ENCODE measurements at regions of chr12 and their contacts with region 1.

Region 1: GRCh38 chr12:6195665-6196535 is 4.3 kb upstream of the CD9 start:
- DNase-seq: no peak
- H3K4me3 ChIP-seq: no peak overlapping the region
- CTCF ChIP-seq: peak; percentile 93

Region 2: GRCh38 chr12:5988659-5989116 is 207.2 kb before region 1 on chr12:
- CTCF ChIA-PET with region 1: interaction called, 18 read pairs
- POLR2A ChIA-PET with region 1: no interaction called
- DNase-seq: peak; percentile 5
- H3K4me3 ChIP-seq: no peak overlapping the region
- CTCF ChIP-seq: peak; percentile 98

Region 3: GRCh38 chr12:6062757-6063735 is 132.9 kb before region 1 on chr12:
- CTCF ChIA-PET with region 1: interaction called, 20 read pairs
- POLR2A ChIA-PET with region 1: no interaction called
- DNase-seq: no peak
- H3K4me3 ChIP-seq: no peak overlapping the region
- CTCF ChIP-seq: peak; percentile 98

Region 4: DNA sequence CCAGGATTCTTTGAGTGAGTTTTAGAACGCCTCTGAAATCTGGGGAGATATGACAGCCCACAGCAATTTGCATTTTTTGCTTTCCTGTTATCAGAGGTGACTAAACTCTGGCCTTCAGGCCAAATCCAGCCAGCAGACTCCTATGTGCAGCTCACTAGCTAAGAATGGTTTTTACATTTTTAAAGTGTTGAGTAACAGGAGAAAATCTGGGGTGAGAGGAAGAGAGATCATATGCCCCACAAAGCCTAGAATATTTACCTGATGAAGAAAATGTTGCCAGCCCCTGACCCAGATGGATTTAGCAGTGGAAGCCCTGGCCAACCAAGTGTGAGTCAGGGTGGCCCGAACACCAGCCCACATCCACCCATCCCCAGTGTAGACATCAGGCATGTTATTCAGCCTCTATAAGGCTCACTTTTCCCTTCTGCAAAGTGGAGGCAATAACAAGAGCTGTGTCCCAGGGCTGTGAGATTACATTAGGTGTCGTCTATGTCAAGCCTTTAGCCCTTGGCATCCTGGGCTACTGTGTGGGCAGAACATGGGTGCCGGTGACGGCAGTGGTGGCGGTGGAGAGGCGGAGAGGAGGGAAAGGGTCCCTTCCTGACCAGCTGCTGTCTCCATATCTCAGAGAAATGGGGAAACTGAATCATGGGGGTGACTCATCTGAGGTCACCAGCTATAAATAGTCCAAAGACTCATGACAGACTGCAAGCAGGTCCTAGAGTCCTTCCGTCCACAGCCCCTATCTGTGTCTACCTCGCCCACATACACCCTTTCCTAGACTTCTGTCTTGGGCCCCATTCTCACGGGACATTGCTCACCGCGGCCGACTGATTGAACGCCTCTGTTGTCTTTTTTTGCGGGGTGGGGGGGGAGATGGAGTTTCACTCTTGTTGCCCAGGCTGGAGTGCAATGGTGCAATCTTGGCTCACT is 28.3 kb before region 1 on chr12:
- CTCF ChIA-PET with region 1: interaction called, 23 read pairs
- POLR2A ChIA-PET with region 1: no interaction called
- DNase-seq: peak; percentile 71
- H3K4me3 ChIP-seq: no peak overlapping the region
- CTCF ChIP-seq: no peak

Region 5: DNA sequence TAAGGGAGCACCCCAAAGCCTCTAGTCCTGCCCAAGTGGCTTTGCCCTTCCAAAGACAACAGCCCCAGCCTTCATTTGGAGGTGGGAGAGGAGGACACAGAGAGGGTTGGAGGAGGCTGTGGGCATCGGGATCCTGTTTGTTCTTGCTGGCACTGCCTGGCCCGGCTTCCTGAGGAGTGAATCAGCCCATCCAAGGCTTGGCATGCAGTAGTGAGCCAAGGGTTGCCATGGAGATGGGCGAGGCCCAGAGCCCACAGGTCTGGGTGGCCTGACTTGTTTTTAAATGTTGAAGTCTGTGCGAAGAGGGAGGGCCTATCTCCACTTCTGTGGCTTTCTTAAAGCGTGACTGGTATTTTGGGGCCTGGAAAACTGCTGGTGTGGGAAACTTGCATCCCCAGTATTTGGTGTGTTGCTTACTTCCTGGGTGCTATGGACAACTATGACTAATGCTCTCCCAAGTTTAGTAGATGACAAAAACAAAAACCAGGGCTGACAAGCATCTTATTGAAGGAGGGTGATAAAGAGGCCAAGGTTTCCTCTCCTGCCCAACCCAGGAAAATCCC is 20.1 kb after region 1 on chr12:
- CTCF ChIA-PET with region 1: interaction called, 207 read pairs
- POLR2A ChIA-PET with region 1: no interaction called
- DNase-seq: peak; percentile 75
- H3K4me3 ChIP-seq: no peak overlapping the region
- CTCF ChIP-seq: no peak

Region 6: DNA sequence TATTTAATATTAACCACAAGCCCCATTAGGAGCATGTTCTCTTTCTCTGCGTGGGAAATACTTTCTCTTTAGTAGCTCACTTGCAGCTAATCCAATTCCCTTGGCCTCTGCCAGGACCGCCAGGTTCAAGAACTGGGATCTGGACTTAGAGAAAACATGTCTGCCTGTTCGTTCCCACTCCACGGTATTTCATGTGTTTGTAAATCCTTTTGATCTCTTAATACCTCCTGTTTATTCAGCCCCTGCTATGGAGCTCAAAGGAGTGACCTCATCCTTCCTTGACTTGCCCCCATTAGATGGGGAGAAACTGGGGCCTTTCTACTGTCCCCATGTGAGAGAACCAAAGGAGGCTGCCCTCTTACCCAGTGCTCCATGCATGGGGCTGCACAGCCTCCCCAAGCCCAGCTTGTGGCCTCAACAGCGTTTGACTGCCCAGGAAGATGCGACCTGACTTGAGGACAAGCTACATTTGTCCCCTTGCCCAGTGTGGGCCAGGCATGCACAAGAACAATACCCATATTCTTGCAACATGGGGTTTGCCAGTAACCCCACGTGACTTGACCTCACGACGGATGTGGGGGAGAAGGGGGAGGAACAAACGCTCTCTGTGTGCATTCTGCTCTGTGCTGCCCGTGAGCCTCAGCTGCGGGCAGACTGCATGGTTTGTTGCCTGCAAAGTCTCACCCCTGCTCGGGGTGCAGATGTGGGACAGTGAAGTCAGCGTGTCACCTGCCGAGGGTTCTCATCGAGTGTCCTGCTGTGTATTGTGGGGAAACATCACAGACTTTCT is 34.6 kb after region 1 on chr12:
- CTCF ChIA-PET with region 1: interaction called, 10 read pairs
- POLR2A ChIA-PET with region 1: no interaction called
- DNase-seq: no peak
- H3K4me3 ChIP-seq: no peak overlapping the region
- CTCF ChIP-seq: no peak

Region 7: GRCh38 chr12:6285063-6285477 is 89.2 kb after region 1 on chr12:
- CTCF ChIA-PET with region 1: interaction called, 269 read pairs
- POLR2A ChIA-PET with region 1: no interaction called
- DNase-seq: no peak
- H3K4me3 ChIP-seq: no peak overlapping the region
- CTCF ChIP-seq: peak; percentile 73

Measured in AG04449 (cell line).